ENCODE measurements at regions of chr9 and their contacts with region 1.

Region 1: DNA sequence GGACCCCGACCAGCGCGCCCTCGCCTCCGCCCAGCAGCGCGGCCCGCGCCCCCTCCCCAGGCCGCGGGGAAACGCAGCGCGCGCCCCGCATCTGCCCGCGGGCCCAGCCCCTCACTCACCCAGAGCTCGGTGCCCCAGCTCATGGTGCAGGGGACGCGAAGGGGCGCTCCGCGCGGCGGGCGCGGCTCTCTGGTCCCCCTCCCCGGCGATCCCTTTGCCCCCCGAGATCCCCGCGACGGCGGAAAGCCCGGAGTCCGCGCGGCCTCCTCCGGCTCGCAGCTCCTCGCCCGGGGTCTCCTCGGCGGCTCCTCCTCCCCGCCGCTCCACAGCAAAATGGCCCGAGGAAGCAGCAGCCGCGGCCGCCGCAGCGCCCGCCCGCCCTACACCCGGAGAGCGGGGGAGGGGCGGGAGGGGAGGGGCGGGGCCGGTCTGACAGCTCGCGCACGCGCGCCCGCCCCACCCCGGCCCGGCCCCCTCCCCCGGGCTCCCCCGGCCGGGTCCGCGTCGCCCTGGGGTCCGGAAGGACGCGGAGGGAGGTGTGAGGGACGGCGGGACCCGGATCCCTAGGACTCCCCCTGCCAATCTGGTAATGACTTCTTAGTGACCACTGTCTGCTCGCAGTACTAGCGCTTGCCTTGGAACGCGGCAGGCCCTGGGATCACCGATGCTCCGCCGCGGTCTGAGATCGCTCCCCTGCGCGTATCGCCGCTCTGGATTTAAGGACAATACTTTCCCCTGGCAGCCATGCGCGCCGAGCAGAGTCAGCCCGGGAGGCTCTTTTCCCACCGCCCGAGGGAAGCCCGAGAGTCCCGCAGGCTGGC is at the start of gene FNBP1:
- DNase-seq: peak; percentile 94
- H3K4me3 Mint-ChIP-seq: peak within 1 kb of the TSS; percentile 94
- H3K27ac Mint-ChIP-seq: peak within 1 kb of the TSS; percentile 93
- H3K4me1 Mint-ChIP-seq: peaks cover 39% of the 10 kb centered on the region
- H3K27me3 Mint-ChIP-seq: no peaks in the 10 kb centered on the region
- total RNA-seq, gene FNBP1: 245 TPM in 2 replicates

Region 2: GRCh38 chr9:129962889-129963703 is 79.9 kb before region 1 on chr9:
- intact Hi-C with region 1: loop called (anchors 2 kb)
- DNase-seq: peak; percentile 93
- H3K4me3 Mint-ChIP-seq: peak overlapping the region; percentile 84
- H3K27ac Mint-ChIP-seq: peak overlapping the region; percentile 94
- H3K4me1 Mint-ChIP-seq: peaks cover 68% of the 10 kb centered on the region
- H3K27me3 Mint-ChIP-seq: no peaks in the 10 kb centered on the region

Region 3: DNA sequence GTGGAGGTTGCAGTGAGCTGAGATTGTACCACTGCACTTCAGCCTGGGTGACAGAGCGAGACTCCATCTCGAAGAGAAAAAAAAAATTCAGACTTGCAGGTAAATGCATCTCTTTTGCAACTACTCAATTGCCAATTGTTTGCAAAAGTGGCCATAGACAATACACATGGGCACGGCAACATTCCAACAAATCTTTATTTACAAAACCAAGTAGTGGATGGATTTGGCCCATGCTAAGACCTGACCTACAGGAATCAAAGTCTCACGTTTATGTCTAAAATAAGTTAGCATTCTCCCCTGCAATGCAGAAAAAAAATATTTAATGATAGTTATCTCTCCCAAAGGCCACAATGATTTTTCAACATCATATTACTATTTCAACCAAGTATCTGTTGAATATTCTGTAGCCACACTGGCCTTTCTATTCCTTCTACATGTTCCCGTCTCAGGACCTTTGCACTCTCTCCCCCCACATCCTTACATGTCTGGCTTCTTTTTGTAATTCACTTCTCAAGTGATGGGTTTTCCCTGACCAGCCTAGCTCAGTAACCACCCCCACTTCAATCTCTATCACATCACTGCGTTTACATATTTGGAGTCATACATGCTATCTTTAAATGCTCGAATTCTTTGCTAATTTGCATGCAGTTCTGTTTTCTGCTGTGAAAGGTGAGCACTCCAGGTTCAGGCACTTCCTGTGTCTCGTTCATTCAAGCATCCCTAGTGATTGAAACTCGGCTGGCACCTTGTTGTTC is 54.3 kb before region 1 on chr9:
- intact Hi-C with region 1: loop called (anchors 2 kb)
- DNase-seq: peak; percentile 66
- H3K4me3 Mint-ChIP-seq: peak overlapping the region; percentile 31
- H3K27ac Mint-ChIP-seq: peak overlapping the region; percentile 92
- H3K4me1 Mint-ChIP-seq: peaks cover 49% of the 10 kb centered on the region
- H3K27me3 Mint-ChIP-seq: no peaks in the 10 kb centered on the region

Region 4: GRCh38 chr9:129999141-129999510 is 43.9 kb before region 1 on chr9:
- intact Hi-C with region 1: no loop called
- DNase-seq: no peak
- H3K4me3 Mint-ChIP-seq: peak overlapping the region; percentile 58
- H3K27ac Mint-ChIP-seq: peak overlapping the region; percentile 86
- H3K4me1 Mint-ChIP-seq: peaks cover 57% of the 10 kb centered on the region
- H3K27me3 Mint-ChIP-seq: no peaks in the 10 kb centered on the region

Region 5: GRCh38 chr9:130029223-130029973 is 13.6 kb before region 1 on chr9:
- intact Hi-C with region 1: loop called (anchors 1 kb)
- DNase-seq: peak; percentile 75
- H3K4me3 Mint-ChIP-seq: peak overlapping the region; percentile 71
- H3K27ac Mint-ChIP-seq: peak overlapping the region; percentile 92
- H3K4me1 Mint-ChIP-seq: peaks cover 74% of the 10 kb centered on the region
- H3K27me3 Mint-ChIP-seq: no peaks in the 10 kb centered on the region

Region 6: DNA sequence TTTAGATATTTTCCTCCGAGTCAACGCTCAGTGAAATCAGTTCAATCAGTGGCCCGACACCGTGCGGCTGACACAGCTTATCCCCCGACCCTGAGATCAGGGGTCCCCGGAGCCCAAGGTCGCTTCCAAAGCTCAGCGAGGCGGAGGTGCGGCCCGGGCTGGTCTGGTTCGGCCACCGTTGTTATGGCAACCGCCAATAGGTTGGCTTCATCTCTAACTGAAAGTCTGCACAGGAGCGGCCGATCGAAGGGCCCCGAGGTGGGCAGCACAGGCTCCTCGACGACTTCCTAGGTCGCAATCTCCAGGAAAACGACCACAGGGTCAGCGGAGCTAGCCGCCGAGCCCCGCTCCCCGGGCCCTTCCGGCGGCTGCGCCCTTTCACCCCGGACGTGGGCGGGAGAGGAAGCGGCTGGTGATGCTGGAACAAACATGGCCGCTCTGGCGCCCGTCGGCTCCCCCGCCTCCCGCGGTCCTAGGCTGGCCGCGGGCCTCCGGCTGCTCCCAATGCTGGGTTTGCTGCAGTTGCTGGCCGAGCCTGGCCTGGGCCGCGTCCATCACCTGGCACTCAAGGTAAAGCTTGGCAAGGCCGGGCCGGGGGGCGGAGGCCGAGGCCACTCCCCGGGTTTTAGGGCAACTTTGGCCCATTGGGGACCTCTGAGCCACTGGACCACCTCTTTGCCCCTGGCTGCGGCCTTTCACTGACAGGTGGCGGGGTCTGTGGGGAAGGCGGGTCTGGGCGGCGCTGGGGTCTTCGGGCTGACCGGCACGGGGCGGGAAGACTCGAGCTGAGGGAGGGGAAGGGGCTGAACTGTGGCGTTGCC is 10.7 kb after region 1 on chr9 and contains the start of gene GPR107:
- intact Hi-C with region 1: loop called (anchors 1 kb)
- DNase-seq: peak; percentile 94
- H3K4me3 Mint-ChIP-seq: peak within 1 kb of the TSS; percentile 95
- H3K27ac Mint-ChIP-seq: peak within 1 kb of the TSS; percentile 93
- H3K4me1 Mint-ChIP-seq: peaks cover 27% of the 10 kb centered on the region
- H3K27me3 Mint-ChIP-seq: no peaks in the 10 kb centered on the region
- total RNA-seq, gene GPR107: 19.2 and 23.6 TPM in 2 replicates

Region 7: GRCh38 chr9:130478736-130479575 is 435.9 kb after region 1 on chr9:
- intact Hi-C with region 1: no loop called
- DNase-seq: no peak
- H3K4me3 Mint-ChIP-seq: no peak overlapping the region
- H3K27ac Mint-ChIP-seq: no peak overlapping the region
- H3K4me1 Mint-ChIP-seq: no peaks in the 10 kb centered on the region
- H3K27me3 Mint-ChIP-seq: peaks cover 17% of the 10 kb centered on the region